ENCODE measurements at regions of chr1 and their contacts with region 1.

Region 1: DNA sequence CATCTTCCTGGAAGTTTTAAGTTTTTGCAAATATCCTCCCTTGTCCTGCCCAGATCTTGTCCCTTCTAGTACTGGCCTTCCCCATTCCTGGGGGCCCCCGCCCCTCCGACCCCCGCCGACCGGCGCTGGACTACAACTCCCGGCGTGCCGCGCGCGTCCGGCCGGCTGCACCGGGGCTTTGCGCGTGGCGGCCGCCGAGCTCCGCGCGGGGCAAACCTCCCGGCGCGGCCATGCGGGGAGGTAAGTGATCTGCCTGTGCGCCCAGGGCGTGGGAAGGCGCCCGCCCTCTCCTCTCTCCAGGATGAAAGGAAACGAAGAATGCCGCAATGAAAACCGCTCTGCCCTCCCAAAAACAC is 3.2 kb upstream of the SAMD13 start:
- DNase-seq: peak; percentile 72 to 86
- ATAC-seq: peak; percentile 91
- H3K4me3 ChIP-seq: peak overlapping the region; percentile 39 to 52
- H3K27ac ChIP-seq: peak overlapping the region in 1 of 2 donors; percentile 73
- H3K4me1 ChIP-seq: peaks cover 0 to 4% of the 10 kb centered on the region in 2 donors
- H3K27me3 ChIP-seq: no peaks in the 10 kb centered on the region

Region 2: DNA sequence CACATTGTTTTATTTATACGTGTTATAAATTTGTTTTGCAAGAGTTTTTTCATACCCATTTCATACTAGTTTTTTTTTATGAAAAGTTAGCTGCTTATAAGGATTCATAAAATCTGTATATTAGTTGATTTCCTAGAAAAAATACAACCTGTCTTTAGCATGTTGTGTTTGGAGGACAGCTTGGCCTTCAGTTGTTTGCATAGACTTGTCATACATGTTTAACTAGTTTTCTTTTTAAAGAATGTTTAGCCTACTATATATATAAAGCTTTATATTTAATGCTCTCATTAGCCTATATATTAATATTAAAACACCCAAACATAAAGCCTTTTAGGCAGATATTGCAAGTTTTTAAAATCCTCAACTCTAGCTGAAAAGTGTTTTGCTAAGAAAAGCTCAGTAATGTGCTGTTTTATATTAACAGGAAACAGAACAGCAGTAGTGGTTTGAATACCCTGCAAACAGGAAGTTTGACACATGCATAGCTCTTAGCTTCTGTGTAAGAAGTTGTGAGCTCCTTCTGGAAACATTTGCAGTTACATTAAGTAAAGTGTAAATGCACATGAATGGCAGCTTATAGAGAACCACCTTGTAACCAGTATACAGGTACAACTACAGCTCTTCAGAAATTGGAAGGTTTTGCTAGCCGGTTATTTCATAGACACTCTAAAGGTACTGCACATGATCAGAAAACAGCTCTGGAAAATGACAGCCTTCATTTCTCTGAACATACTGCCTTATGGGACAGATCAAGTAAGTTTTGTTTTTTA is 154.3 kb before region 1 on chr1 and contains the start of gene PRKACB:
- intact Hi-C with region 1: no loop called
- DNase-seq: no peak
- ATAC-seq: no peak
- H3K4me3 ChIP-seq: no peak within 1 kb of the TSS
- H3K27ac ChIP-seq: no peak within 1 kb of the TSS
- H3K4me1 ChIP-seq: no peaks in the 10 kb centered on the region
- H3K27me3 ChIP-seq: no peaks in the 10 kb centered on the region
- total RNA-seq, gene PRKACB: 46.6 to 51.5 TPM

Region 3: DNA sequence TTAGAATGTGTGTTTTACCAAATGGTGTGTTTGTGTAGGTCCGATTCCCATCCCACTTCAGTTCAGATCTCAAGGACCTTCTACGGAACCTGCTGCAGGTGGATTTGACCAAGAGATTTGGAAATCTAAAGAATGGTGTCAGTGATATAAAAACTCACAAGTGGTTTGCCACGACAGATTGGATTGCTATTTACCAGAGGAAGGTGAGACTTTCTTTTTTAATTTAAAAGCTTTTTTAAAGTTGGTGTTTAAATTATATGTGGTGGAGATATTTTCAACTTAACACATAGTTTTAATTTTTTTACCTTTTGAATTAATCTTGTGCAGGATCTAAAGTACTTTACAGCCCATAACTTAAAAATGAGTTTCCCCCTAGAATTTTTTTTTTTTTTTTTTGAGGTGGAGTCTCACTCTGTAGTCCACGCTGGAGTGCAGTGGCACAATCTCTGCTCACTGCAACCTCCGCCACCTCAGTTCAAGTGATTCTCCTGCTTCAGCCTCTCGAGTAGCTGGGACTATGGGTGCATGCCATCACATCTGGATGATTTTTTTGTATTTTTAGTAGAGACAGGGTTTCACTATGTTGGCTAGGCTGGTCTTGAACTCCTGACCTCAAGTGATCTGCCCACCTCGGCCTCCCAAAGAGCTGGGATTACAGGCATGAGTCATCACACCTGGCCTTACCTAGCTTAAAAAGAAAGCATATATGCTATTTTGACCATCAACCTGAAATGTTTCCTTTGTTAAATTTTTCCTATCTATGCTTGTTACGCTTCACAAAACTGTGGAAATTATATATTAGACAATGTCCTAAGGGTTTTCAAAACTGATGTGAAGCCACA is 84.0 kb before region 1 on chr1:
- intact Hi-C with region 1: no loop called
- DNase-seq: no peak
- ATAC-seq: no peak
- H3K4me3 ChIP-seq: no peak overlapping the region
- H3K27ac ChIP-seq: no peak overlapping the region
- H3K4me1 ChIP-seq: no peaks in the 10 kb centered on the region
- H3K27me3 ChIP-seq: no peaks in the 10 kb centered on the region

Region 4: GRCh38 chr1:84253891-84254290 is 44.4 kb before region 1 on chr1:
- intact Hi-C with region 1: loop called in 1 of 2 experiments (anchors 5 kb)
- DNase-seq: peak; percentile 74 to 77
- ATAC-seq: peak; percentile 86
- H3K4me3 ChIP-seq: no peak overlapping the region
- H3K27ac ChIP-seq: peak overlapping the region; percentile 38 to 63
- H3K4me1 ChIP-seq: peaks cover 4 to 12% of the 10 kb centered on the region in 2 donors
- H3K27me3 ChIP-seq: no peaks in the 10 kb centered on the region

Region 5: DNA sequence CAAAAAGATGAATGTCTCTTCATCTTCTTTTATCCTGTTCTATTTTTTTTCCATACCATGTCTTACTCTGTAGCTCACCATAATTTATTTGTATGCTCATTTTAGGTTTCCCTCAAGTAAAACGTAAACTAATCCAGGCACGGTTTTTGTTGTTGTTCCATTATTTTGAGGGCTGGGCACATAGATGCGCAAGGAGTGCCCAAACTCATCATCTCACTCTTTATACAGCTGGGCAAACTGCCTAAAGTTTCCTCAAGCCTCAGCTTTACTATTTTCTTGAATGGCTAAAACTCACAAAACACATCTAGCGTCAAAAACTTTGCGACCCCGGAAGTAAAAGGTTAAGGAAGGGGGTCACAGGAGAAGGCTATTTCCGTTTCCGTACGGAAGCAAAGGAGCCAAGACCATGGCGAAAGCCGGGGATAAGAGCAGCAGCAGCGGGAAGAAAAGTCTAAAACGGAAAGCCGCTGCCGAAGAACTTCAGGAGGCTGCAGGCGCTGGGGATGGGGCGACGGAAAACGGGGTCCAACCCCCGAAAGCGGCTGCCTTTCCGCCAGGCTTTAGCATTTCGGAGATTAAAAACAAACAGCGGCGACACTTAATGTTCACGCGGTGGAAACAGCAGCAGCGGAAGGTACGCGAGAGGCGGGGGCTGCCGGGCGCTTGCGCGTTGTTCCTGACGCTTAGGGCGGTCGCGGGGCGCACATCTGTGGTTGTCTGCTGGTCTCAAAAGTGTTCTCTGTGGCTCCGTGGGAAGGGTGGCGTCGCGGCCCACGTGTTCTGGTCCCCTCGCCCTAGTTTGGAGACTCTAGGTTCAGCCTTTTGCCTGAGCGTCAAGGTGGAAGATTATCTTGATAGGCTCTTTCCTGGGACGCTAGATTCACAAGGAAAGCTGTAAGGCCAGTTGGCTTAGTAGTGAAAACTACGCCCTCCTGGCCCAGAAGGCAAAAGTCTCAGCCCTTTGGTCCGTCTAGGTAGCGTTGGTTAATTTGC is 180.9 kb after region 1 on chr1 and contains the start of gene RPF1:
- intact Hi-C with region 1: no loop called
- DNase-seq: peak; percentile 74 to 91
- ATAC-seq: peak; percentile 95
- H3K4me3 ChIP-seq: peak within 1 kb of the TSS; percentile 67 to 90
- H3K27ac ChIP-seq: peak within 1 kb of the TSS; percentile 61 to 68
- H3K4me1 ChIP-seq: peaks cover 0 to 2% of the 10 kb centered on the region in 2 donors
- H3K27me3 ChIP-seq: no peaks in the 10 kb centered on the region
- total RNA-seq, gene RPF1: 18.6 to 25.1 TPM

Measured in aorta (tissue), 5 donors.